ENCODE measurements at regions of chr1 and their contacts with region 1.

Region 1: GRCh38 chr1:89085781-89086180 is 20.8 kb upstream of the GBP1 start:
- DNase-seq: peak; percentile 67
- H3K4me3 ChIP-seq: no peak overlapping the region
- H3K27ac ChIP-seq: no peak overlapping the region
- H3K4me1 ChIP-seq: no peaks in the 10 kb centered on the region
- H3K27me3 ChIP-seq: peaks cover 0 to 3% of the 10 kb centered on the region in 2 experiments
- CTCF ChIP-seq: peak in 1 of 2 donors; percentile 74
- POLR2A ChIP-seq: no peak

Region 2: GRCh38 chr1:88892357-88892877 is 193.4 kb before region 1 on chr1:
- CTCF ChIA-PET with region 1: no interaction called
- POLR2A ChIA-PET with region 1: no interaction called
- dilution Hi-C with region 1: no loop called
- intact Hi-C with region 1: no loop called
- DNase-seq: peak; percentile 53
- H3K4me3 ChIP-seq: peak overlapping the region in 2 of 3 experiments; percentile 18 to 91
- H3K27ac ChIP-seq: no peak overlapping the region
- H3K4me1 ChIP-seq: peaks cover 7% of the 10 kb centered on the region
- H3K27me3 ChIP-seq: peaks cover 2 to 5% of the 10 kb centered on the region in 2 experiments
- CTCF ChIP-seq: no peak
- POLR2A ChIP-seq: no peak

Region 3: DNA sequence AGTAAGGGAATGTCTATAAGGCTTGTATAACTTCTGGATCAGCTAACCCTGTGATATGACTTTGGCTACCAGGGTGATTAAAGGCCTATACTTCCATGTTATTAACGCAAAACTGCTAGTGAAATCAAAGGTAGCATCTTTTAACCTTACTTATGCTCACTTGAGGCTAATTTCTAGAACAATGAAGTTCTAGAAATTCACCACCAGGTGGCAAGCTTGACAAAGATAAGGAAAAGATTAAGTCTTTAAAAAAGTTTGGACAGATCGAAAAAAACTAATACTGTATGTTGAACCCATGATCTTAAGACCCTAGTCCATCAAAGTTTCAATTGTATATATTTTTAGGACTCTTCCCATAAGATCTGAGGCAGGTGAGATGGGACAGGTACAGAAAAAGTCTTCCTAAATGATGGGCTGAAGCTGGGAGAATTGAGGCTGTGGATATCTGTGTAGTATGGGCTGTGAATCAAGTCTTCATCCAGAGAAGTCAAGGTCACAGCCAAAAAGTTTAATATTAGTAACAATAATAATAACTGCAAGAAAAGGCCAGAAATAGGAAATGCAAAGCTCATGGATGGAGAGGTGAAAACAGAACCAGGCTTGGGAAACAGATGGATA is 112.2 kb before region 1 on chr1:
- CTCF ChIA-PET with region 1: interaction called, 9 read pairs
- POLR2A ChIA-PET with region 1: no interaction called
- dilution Hi-C with region 1: no loop called
- intact Hi-C with region 1: loop called (anchors 5 kb)
- DNase-seq: peak; percentile 55
- H3K4me3 ChIP-seq: no peak overlapping the region
- H3K27ac ChIP-seq: no peak overlapping the region
- H3K4me1 ChIP-seq: no peaks in the 10 kb centered on the region
- H3K27me3 ChIP-seq: no peaks in the 10 kb centered on the region
- CTCF ChIP-seq: peak; percentile 34 to 35
- POLR2A ChIP-seq: no peak

Region 4: DNA sequence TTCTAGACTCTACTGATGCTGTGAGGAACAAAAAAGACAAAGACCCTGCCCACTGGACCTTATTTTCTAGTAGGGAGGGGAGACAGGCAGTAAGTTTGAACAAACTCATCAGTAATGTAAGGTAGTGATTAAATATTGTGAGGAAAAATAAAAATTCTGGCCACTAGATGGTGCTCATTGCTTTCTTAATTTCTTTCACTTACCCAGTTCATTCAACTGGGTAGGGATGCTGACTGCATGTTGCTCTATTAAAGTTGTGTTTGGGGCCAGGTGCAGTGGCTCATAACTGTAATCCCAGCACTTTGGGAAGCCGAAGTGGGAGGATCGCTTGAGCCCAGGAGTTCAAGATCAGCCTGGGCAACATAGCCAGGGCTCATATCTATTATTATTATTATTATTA is 87.1 kb before region 1 on chr1:
- CTCF ChIA-PET with region 1: interaction called, 30 read pairs
- POLR2A ChIA-PET with region 1: no interaction called
- dilution Hi-C with region 1: no loop called
- intact Hi-C with region 1: no loop called
- DNase-seq: peak; percentile 69
- H3K4me3 ChIP-seq: no peak overlapping the region
- H3K27ac ChIP-seq: no peak overlapping the region
- H3K4me1 ChIP-seq: peaks cover 6% of the 10 kb centered on the region
- H3K27me3 ChIP-seq: no peaks in the 10 kb centered on the region
- CTCF ChIP-seq: peak; percentile 21 to 24
- POLR2A ChIP-seq: no peak

Region 5: DNA sequence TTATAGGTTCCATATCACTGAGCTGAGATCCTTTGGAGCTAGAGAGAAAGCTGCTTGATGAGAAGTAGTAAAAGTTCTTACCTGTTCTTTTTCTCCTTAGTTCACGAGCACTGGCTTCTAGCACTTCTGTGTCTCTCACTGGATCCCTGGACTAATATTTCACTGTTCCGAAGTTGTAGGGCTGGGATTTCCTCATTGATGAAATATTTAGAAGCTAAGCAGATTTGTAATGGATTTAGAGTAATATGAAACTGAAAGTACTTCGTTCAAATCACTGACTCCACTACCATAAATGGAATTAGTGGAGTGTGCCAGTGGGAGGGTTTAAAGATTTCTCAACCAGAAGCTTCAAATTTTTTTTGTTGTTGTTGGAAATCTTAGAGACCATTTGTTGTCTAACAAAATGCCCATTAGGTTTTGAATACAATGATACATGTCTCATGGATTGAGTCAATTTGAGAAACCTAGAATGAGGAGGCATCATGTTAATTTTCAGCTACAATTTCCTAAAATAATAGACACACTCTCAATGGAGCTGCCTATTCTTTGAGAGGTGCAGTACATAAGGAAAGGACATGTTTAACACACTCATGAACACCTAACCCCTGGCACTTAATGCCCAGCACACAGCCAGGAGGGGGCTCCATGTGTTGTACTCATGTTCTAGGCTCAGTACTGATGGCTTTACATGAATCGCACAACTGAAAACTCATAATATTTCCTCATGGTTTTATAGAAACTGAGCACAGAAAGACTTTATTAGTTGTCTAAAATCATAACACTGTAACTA is 20.5 kb before region 1 on chr1 and contains the start of gene GBP1:
- CTCF ChIA-PET with region 1: interaction called, 18 read pairs
- POLR2A ChIA-PET with region 1: interaction called, 9 read pairs
- dilution Hi-C with region 1: no loop called
- intact Hi-C with region 1: no loop called
- DNase-seq: peak; percentile 84
- H3K4me3 ChIP-seq: peak within 1 kb of the TSS; percentile 39 to 77 (median 54)
- H3K27ac ChIP-seq: peak within 1 kb of the TSS; percentile 16
- H3K4me1 ChIP-seq: peaks cover 9% of the 10 kb centered on the region
- H3K27me3 ChIP-seq: no peaks in the 10 kb centered on the region
- CTCF ChIP-seq: no peak
- POLR2A ChIP-seq: no peak
- total RNA-seq, gene GBP1: 17.8 and 28.0 TPM in 2 replicates

Region 6: GRCh38 chr1:89149229-89149628 is 63.4 kb after region 1 on chr1:
- CTCF ChIA-PET with region 1: interaction called, 38 read pairs
- POLR2A ChIA-PET with region 1: interaction called, 5 read pairs
- dilution Hi-C with region 1: no loop called
- intact Hi-C with region 1: no loop called
- DNase-seq: peak; percentile 14
- H3K4me3 ChIP-seq: no peak overlapping the region
- H3K27ac ChIP-seq: no peak overlapping the region
- H3K4me1 ChIP-seq: no peaks in the 10 kb centered on the region
- H3K27me3 ChIP-seq: no peaks in the 10 kb centered on the region
- CTCF ChIP-seq: peak in 1 of 2 donors; percentile 29
- POLR2A ChIP-seq: no peak

Region 7: GRCh38 chr1:89310505-89310904 is 224.7 kb after region 1 on chr1:
- CTCF ChIA-PET with region 1: interaction called, 10 read pairs
- POLR2A ChIA-PET with region 1: no interaction called
- dilution Hi-C with region 1: no loop called
- intact Hi-C with region 1: no loop called
- DNase-seq: peak; percentile 39
- H3K4me3 ChIP-seq: no peak overlapping the region
- H3K27ac ChIP-seq: no peak overlapping the region
- H3K4me1 ChIP-seq: no peaks in the 10 kb centered on the region
- H3K27me3 ChIP-seq: no peaks in the 10 kb centered on the region
- CTCF ChIP-seq: no peak
- POLR2A ChIP-seq: no peak

Region 8: GRCh38 chr1:89407360-89407759 is 321.6 kb after region 1 on chr1:
- CTCF ChIA-PET with region 1: no interaction called
- POLR2A ChIA-PET with region 1: no interaction called
- dilution Hi-C with region 1: no loop called
- intact Hi-C with region 1: no loop called
- DNase-seq: no peak
- H3K4me3 ChIP-seq: no peak overlapping the region
- H3K27ac ChIP-seq: no peak overlapping the region
- H3K4me1 ChIP-seq: no peaks in the 10 kb centered on the region
- H3K27me3 ChIP-seq: no peaks in the 10 kb centered on the region
- CTCF ChIP-seq: no peak
- POLR2A ChIP-seq: no peak

Region 9: GRCh38 chr1:89454845-89455521 is 369.2 kb after region 1 on chr1:
- CTCF ChIA-PET with region 1: interaction called, 25 read pairs
- POLR2A ChIA-PET with region 1: no interaction called
- dilution Hi-C with region 1: no loop called
- intact Hi-C with region 1: loop called (anchors 1 kb)
- DNase-seq: peak; percentile 58
- H3K4me3 ChIP-seq: no peak overlapping the region
- H3K27ac ChIP-seq: no peak overlapping the region
- H3K4me1 ChIP-seq: no peaks in the 10 kb centered on the region
- H3K27me3 ChIP-seq: peaks cover 0 to 7% of the 10 kb centered on the region in 2 experiments
- CTCF ChIP-seq: peak; percentile 22 to 39
- POLR2A ChIP-seq: no peak